ENCODE measurements at regions of chr10 and their contacts with region 1.

Region 1: GRCh38 chr10:46325023-46325422 is 38.2 kb downstream of the ANTXRL start:
- DNase-seq: no peak
- ATAC-seq: peak; percentile 48 to 74

Region 2: DNA sequence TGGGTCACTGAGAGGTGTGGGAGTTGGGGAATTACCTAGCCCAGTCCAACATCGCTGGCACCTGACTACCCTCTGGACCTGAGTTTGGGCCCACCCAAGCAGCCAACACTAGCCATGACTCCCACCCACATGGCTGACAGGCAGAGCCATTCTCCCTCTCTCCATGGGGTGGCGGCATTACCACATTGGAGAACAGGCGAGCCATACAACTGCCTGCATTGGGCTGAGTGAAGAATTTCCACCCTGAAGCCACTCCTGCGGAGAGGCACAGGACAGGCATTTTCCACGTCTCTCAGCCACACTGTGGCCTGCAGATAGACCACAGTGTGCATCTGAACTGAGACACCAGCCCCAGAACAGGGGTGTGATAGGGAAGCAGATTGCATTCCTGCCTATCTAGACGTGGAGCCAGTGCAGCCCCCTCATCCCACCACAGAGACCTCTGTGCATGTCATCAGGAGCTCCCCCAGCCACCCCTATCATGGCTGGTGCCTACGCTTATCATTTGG is 96.4 kb before region 1 on chr10:
- intact Hi-C with region 1: loop called in 1 of 2 experiments (anchors 5 kb)
- DNase-seq: peak; percentile 74
- ATAC-seq: peak; percentile 96 to 97

Measured in left cardiac atrium (tissue), 4 donors.